ENCODE measurements at regions of chr12 and their contacts with region 1.

Region 1: GRCh38 chr12:8590842-8591550 is 21.7 kb downstream of the AICDA start:
- DNase-seq: no peak

Region 2: DNA sequence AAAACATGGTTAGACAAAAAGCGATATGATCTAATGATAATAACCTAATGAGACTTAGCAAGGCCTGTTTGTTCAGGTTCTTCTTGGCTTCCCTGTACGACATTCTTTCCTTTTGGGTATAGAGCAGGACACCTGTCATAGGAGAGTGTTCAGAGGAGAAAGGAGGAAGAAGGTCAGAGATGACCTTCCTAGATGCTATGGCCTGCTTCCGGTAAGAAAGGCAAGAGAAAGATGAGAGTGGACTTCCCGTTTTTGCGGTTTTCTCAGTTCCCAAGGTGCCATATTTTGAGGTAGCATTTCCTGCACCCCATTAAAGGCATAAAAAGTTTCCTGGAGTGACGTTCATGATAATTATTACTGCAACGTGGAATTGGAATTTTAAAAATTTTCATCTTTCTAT is 59.0 kb before region 1 on chr12:
- CTCF ChIA-PET with region 1: no interaction called
- POLR2A ChIA-PET with region 1: no interaction called
- DNase-seq: no peak

Region 3: DNA sequence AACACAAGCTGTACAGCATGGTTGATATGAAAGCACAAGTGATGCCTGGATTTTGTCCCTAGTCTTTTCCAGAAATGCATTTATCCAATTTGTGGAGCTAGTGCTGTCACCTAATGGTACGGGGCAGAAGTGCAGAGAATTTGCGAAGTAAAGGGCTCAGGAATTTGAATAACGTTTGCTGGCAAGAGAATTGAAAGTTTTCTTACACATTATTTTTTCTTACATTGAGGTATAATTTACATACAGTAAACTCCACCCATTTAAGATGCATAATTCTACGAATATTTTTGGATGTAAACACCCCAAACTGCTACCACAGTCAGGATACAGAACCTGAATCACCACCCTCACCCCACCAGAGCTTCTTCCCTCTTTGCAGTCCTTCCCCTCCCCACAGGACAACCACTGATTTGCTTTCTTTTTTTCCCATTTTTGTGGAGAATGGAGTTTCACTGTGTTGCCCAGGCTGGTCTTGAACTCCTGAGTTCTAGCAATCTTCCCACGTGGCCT is 18.1 kb after region 1 on chr12:
- CTCF ChIA-PET with region 1: interaction called, 10 read pairs
- POLR2A ChIA-PET with region 1: no interaction called
- DNase-seq: peak; percentile 64